ENCODE measurements at regions of chr2 and their contacts with region 1.

Region 1: GRCh38 chr2:95022309-95023221 is 2.9 kb upstream of the MAL start:
- DNase-seq: peak; percentile 92
- ATAC-seq: peak; percentile 55
- H3K4me3 Mint-ChIP-seq: peak overlapping the region; percentile 81
- H3K27ac Mint-ChIP-seq: peak overlapping the region; percentile 92
- H3K4me1 Mint-ChIP-seq: peaks cover 34% of the 10 kb centered on the region
- H3K27me3 Mint-ChIP-seq: peaks cover 2% of the 10 kb centered on the region

Region 2: DNA sequence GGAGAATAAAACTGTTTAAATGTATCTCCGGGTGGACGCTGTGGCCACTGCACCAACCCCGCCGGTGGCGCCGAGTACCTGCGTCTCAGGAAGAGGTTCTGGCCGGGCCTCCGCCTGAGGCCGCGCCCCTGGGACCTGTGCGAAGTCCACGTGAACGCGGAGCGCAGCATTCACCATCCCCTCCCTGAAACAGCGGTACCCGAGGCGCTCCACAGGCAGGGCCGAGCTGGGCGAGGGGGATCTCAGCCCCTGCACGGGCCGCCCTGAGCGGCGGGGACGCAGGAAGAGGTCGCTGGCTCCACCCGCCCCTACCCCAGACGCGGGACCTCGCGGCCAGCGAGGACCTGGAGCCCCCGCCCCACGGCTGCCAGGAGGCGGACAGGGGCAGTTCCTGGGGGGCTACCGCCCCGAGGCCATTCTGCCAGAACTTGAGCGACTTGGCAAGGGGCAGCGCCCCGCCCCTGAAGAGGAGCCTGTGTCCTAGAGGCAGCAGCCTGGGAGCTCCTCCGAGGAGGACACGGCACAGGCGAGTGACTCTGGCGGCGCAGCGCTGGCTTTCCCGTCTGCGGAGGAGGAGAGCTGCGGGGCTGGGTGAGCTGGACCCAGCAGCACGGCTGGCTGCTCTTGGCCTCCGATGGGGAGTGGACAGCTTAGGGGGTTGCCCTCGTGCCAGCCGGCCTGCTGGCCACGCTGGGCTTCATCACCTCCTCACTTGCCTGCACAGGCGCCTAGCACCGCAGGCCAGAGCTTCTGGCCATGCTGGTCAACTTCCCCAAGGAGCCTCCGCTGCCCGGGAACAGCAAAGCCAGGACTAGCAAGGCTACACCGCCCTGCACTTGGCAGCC is 161.0 kb before region 1 on chr2:
- POLR2A ChIA-PET with region 1: no interaction called
- DNase-seq: peak; percentile 24
- ATAC-seq: no peak
- H3K4me3 Mint-ChIP-seq: no peak overlapping the region
- H3K27ac Mint-ChIP-seq: no peak overlapping the region
- H3K4me1 Mint-ChIP-seq: peaks cover 6% of the 10 kb centered on the region
- H3K27me3 Mint-ChIP-seq: peaks cover 66% of the 10 kb centered on the region

Region 3: DNA sequence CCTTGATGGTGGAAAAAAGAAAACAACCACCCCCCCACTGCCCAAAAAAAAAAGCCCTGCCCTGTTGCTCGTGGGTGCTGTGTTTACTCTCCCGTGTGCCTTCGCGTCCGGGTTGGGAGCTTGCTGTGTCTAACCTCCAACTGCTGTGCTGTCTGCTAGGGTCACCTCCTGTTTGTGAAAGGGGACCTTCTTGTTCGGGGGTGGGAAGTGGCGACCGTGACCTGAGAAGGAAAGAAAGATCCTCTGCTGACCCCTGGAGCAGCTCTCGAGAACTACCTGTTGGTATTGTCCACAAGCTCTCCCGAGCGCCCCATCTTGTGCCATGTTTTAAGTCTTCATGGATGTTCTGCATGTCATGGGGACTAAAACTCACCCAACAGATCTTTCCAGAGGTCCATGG is 31.0 kb after region 1 on chr2:
- POLR2A ChIA-PET with region 1: interaction called, 40 read pairs
- DNase-seq: peak; percentile 28
- ATAC-seq: no peak
- H3K4me3 Mint-ChIP-seq: no peak overlapping the region
- H3K27ac Mint-ChIP-seq: peak overlapping the region; percentile 72
- H3K4me1 Mint-ChIP-seq: peaks cover 52% of the 10 kb centered on the region
- H3K27me3 Mint-ChIP-seq: no peaks in the 10 kb centered on the region

Region 4: DNA sequence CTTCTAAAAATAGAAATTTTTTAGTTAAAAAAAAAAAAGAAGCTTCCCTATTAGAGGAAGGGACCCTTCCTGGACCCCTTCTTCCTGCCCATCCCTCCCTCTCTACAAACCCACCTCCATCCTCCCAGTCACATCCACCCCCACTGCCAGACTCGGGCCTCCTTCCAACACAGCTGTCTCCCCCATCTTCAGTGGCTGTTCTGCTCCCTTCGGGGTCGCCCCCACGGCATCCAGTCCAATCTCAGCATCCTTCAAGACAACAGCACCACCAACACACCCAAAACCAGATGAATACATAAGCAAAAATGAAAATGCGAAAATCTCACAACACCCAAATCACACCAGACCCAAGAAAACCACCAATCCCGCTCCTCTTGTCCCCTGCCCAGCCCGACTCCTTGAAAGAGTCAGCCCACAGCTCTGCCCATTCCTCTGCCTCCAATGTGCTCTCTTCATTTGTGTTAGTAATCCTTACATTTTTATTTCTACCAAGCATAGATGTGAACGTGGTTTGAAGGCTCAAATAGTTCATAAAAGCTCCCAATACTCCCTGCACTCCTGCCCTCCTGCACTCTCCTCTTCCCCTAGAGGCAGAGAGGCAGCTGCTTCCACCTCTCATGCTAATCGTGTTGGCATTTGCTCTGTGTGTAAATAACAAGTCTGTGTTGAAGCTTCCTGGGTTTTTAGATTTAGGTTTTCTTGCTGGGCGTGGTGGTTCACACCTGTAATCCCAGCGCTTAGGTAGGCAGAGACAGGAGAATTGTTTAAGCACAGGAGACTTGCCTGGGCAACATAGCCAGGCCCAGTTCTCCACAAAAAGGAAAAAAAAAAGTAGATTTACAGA is 39.9 kb after region 1 on chr2:
- POLR2A ChIA-PET with region 1: interaction called, 40 read pairs
- DNase-seq: no peak
- ATAC-seq: peak; percentile 2
- H3K4me3 Mint-ChIP-seq: peak overlapping the region; percentile 45
- H3K27ac Mint-ChIP-seq: peak overlapping the region; percentile 86
- H3K4me1 Mint-ChIP-seq: peaks cover 30% of the 10 kb centered on the region
- H3K27me3 Mint-ChIP-seq: no peaks in the 10 kb centered on the region

Region 5: DNA sequence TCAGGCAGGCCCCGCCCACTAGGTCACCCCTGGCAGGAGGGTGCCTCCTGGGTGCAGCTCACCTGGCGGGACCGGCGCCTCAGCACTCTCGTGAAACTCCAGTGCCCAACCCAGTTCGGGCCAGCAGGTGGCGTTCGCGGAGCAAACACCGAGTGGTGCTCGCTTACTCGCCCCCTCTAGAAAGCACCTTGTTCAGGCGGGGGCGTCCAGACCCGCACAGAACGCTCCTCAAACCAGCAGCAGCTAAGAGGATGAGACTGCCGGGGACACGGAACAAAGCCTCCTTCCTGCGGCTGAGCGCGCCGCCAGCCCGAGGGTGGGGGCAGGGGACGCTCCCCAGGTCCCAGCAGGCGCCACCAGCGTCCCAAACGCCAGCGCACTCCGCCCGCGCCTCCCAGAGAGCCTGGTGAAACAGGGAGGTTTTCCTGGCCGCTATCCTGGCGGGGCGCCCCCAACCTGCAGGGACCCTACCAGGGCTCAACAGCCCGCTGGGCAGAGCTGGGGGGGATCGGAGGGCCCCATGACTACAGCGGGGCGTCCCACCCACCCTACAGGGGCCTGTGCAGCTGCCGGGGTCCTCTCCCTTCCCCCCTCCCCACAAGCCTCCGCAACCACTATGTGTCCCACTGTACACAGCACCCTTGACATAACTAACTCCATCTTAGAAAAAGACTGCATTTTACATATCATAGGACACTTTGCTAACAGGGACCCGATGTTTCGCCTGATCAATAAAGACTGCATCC is 54.4 kb after region 1 on chr2:
- POLR2A ChIA-PET with region 1: interaction called, 358 read pairs
- DNase-seq: peak; percentile 94
- ATAC-seq: peak; percentile 71
- H3K4me3 Mint-ChIP-seq: peak overlapping the region; percentile 86
- H3K27ac Mint-ChIP-seq: peak overlapping the region; percentile 95
- H3K4me1 Mint-ChIP-seq: peaks cover 64% of the 10 kb centered on the region
- H3K27me3 Mint-ChIP-seq: peaks cover 3% of the 10 kb centered on the region

Region 6: DNA sequence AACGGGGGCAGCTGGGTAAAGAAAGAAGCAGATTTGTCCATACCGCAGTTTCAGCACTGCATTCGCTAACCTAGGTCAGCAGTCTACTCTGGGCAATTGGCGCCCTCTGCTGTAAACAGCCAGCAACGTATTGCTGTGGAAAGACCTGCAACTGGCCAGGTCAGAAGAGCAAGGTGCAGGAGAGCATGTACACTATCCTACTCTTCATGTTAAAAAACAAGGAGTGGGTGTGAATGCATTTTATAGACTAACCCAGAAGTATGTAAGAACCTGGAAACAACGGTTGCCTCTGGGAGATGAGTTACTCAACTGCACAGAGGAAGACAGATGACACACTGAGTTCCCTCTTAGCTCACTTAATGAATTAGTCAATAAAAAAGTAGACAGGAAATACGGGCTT is 92.9 kb after region 1 on chr2:
- POLR2A ChIA-PET with region 1: interaction called, 14 read pairs
- DNase-seq: peak; percentile 70
- ATAC-seq: peak; percentile 98
- H3K4me3 Mint-ChIP-seq: peak overlapping the region; percentile 16
- H3K27ac Mint-ChIP-seq: peak overlapping the region; percentile 30
- H3K4me1 Mint-ChIP-seq: peaks cover 39% of the 10 kb centered on the region
- H3K27me3 Mint-ChIP-seq: no peaks in the 10 kb centered on the region

Region 7: DNA sequence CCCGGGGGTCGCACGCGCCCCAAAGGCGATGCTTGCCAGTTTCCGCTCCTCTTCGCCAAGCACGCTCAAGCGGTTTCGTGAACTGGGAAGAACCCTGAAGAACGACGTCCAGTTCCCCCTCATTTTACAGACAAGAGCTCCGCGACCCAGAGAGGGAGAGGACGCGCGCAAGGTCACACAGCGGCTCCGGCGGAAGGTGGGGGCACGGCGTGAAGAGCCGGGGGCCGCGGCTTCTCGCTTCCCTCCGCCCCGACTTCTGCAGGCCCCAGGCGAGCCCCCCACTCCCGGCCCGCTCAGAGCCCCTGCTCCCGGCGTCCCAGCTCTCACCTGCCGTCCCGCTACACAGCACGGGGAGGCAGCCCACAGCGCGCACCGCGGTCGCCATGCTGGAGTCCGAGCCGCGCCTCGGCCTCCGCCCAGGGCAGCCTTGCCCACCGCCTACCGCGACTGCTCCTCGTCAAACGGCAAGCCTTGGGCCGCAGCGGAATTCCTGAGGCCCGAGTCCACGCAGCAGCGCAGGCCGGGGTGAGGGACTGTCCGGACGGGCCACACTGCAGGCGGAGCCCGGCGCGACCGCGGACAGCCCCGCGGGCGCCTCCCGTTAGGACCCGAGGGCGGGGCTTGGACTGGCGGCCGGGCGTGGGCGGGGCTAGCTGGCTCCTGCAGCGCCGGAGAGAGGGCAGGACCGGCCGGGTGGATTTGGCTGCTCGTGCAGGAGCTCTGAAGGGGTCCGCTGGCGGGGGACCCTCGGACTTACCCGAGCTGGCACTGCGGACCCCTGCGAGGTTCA is 99.0 kb after region 1 on chr2 and contains the start of gene MRPS5:
- POLR2A ChIA-PET with region 1: interaction called, 14 read pairs
- DNase-seq: peak; percentile 94
- ATAC-seq: peak; percentile 88
- H3K4me3 Mint-ChIP-seq: peak within 1 kb of the TSS; percentile 94
- H3K27ac Mint-ChIP-seq: peak within 1 kb of the TSS; percentile 93
- H3K4me1 Mint-ChIP-seq: peaks cover 41% of the 10 kb centered on the region
- H3K27me3 Mint-ChIP-seq: no peaks in the 10 kb centered on the region
- total RNA-seq, gene MRPS5: 75.2 to 79.3 TPM